Left cardiac atrium (tissue), 4 donors: ENCODE measurements at regions of chr10 and their contacts with region 1.

Region 1: GRCh38 chr10:78302989-78303854 is 269.6 kb downstream of the RPS24 start:
- DNase-seq: peak; percentile 96
- ATAC-seq: peak; percentile 97 to 98

Region 2: GRCh38 chr10:78047314-78047891 is 255.8 kb before region 1 on chr10:
- intact Hi-C with region 1: loop called in 1 of 2 experiments (anchors 5 kb)
- DNase-seq: peak; percentile 91
- ATAC-seq: peak; percentile 81 to 87

Region 3: DNA sequence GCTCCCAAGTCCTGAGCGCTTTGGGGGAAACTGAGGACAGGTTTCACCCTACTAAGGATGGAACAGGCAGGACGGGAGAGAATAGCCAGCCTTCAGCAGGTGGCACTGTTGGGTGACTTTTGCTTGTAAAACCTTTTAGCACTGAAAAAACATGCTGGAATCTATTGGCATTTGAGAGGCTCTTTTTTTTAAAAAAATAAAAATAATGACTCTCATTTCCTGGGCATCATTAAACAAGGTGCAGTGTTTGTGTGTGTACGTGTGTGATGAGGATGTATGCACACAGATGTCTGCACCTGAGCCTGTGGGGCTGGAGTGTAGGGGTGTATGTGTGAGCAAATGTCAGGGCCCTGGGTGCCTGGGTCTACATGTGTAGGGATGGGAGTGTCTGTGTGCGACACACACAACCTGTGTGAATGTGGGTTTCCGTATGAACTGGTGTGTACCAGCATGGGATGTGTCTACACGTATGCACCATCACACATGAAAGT is 91.6 kb before region 1 on chr10:
- intact Hi-C with region 1: loop called in 1 of 2 experiments (anchors 5 kb)
- DNase-seq: no peak
- ATAC-seq: peak in 1 of 2 donors; percentile 16

Region 4: GRCh38 chr10:79274279-79275104 is 971.3 kb after region 1 on chr10:
- intact Hi-C with region 1: no loop called
- DNase-seq: peak; percentile 87
- ATAC-seq: peak; percentile 81 to 88